WTC11 (cell line): ENCODE measurements at regions of chr17 and their contacts with region 1.

Region 1: GRCh38 chr17:43878260-43879175 is 28.8 kb downstream of the MPP2 start:
- DNase-seq: peak; percentile 89
- ATAC-seq: peak; percentile 83
- H3K4me3 Mint-ChIP-seq: no peak overlapping the region
- H3K27ac Mint-ChIP-seq: no peak overlapping the region
- H3K4me1 Mint-ChIP-seq: peaks cover 14% of the 10 kb centered on the region
- H3K27me3 Mint-ChIP-seq: no peaks in the 10 kb centered on the region
- CTCF ChIP-seq: peak; percentile 91

Region 2: DNA sequence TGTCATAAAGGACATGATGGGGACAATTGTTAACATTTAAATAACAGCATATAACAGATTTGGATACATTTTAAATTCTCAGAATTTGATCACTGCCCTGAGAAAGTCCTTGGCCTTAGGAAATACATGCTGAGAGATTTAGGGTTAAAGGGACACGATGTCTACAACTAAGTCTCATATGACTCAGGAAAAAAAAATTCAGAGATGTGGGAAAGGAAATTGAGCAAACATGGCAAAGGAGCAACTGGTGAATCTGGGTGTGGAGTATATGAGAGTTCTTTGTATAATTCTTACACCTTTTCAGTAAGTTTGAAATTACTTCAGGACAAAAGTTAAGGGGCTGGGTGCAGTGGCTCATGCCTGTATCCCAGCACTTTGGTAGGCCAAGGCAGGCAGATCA is 63.8 kb before region 1 on chr17:
- CTCF ChIA-PET with region 1: interaction called, 10 read pairs
- POLR2A ChIA-PET with region 1: no interaction called
- DNase-seq: no peak
- ATAC-seq: no peak
- H3K4me3 Mint-ChIP-seq: no peak overlapping the region
- H3K27ac Mint-ChIP-seq: 0 out of 2 replicates have a peak overlapping the region, but pooled peaks have one; percentile 1
- H3K4me1 Mint-ChIP-seq: peaks cover 24% of the 10 kb centered on the region
- H3K27me3 Mint-ChIP-seq: no peaks in the 10 kb centered on the region
- CTCF ChIP-seq: no peak

Region 3: GRCh38 chr17:43854453-43854852 is 24.1 kb before region 1 on chr17:
- CTCF ChIA-PET with region 1: interaction called, 10 read pairs
- POLR2A ChIA-PET with region 1: no interaction called
- DNase-seq: no peak
- ATAC-seq: no peak
- H3K4me3 Mint-ChIP-seq: no peak overlapping the region
- H3K27ac Mint-ChIP-seq: no peak overlapping the region
- H3K4me1 Mint-ChIP-seq: no peaks in the 10 kb centered on the region
- H3K27me3 Mint-ChIP-seq: peaks cover 6% of the 10 kb centered on the region
- CTCF ChIP-seq: no peak

Region 4: GRCh38 chr17:43868226-43868994 is 10.1 kb before region 1 on chr17:
- CTCF ChIA-PET with region 1: interaction called, 14 read pairs
- POLR2A ChIA-PET with region 1: no interaction called
- DNase-seq: no peak
- ATAC-seq: no peak
- H3K4me3 Mint-ChIP-seq: no peak overlapping the region
- H3K27ac Mint-ChIP-seq: no peak overlapping the region
- H3K4me1 Mint-ChIP-seq: peaks cover 9% of the 10 kb centered on the region
- H3K27me3 Mint-ChIP-seq: peaks cover 16% of the 10 kb centered on the region
- CTCF ChIP-seq: no peak

Region 5: GRCh38 chr17:43891851-43892646 is 13.5 kb after region 1 on chr17:
- CTCF ChIA-PET with region 1: interaction called, 49 read pairs
- POLR2A ChIA-PET with region 1: no interaction called
- DNase-seq: peak; percentile 33
- ATAC-seq: peak; percentile 93
- H3K4me3 Mint-ChIP-seq: peak overlapping the region; percentile 37
- H3K27ac Mint-ChIP-seq: peak overlapping the region; percentile 94
- H3K4me1 Mint-ChIP-seq: peaks cover 34% of the 10 kb centered on the region
- H3K27me3 Mint-ChIP-seq: no peaks in the 10 kb centered on the region
- CTCF ChIP-seq: no peak

Region 6: GRCh38 chr17:43900183-43900857 is 21.8 kb after region 1 on chr17:
- CTCF ChIA-PET with region 1: interaction called, 39 read pairs
- POLR2A ChIA-PET with region 1: no interaction called
- DNase-seq: peak; percentile 93
- ATAC-seq: peak; percentile 92
- H3K4me3 Mint-ChIP-seq: peak overlapping the region; percentile 75
- H3K27ac Mint-ChIP-seq: no peak overlapping the region
- H3K4me1 Mint-ChIP-seq: peaks cover 52% of the 10 kb centered on the region
- H3K27me3 Mint-ChIP-seq: peaks cover 32% of the 10 kb centered on the region
- CTCF ChIP-seq: no peak

Region 7: GRCh38 chr17:43907425-43907981 is 29.0 kb after region 1 on chr17 and contains the start of gene MPP2:
- CTCF ChIA-PET with region 1: interaction called, 49 read pairs
- POLR2A ChIA-PET with region 1: no interaction called
- DNase-seq: peak; percentile 88
- ATAC-seq: peak; percentile 16
- H3K4me3 Mint-ChIP-seq: peak within 1 kb of the TSS; percentile 90
- H3K27ac Mint-ChIP-seq: no peak within 1 kb of the TSS
- H3K4me1 Mint-ChIP-seq: peaks cover 26% of the 10 kb centered on the region
- H3K27me3 Mint-ChIP-seq: peaks cover 49% of the 10 kb centered on the region
- CTCF ChIP-seq: no peak
- total RNA-seq, gene MPP2: 29.3 to 31.4 TPM (median 29.9 TPM) in 3 replicates